Activated T-helper 2 cell treated with anti-CD3 and anti-CD28 coated beads, Interferon-gamma antibody, Interleukin-2, Interleukin-4, amounts not matched to agents 10 μg/mL and 5 μg/mL and 100 μg/mL, durations not matched to agents 14 hours and 24 hours and 36 hours (primary cell): ENCODE measurements at regions of chr6 and their contacts with region 1.

Region 1: GRCh38 chr6:107033126-107033525 is 5.1 kb downstream of the MTRES1 start:
- DNase-seq: no peak
- H3K4me3 Mint-ChIP-seq: no peak overlapping the region
- H3K27ac Mint-ChIP-seq: peak overlapping the region; percentile 81
- H3K4me1 Mint-ChIP-seq: peaks cover 32% of the 10 kb centered on the region
- H3K27me3 Mint-ChIP-seq: no peaks in the 10 kb centered on the region

Region 2: GRCh38 chr6:106894978-106895702 is 138.0 kb before region 1 on chr6:
- intact Hi-C with region 1: no loop called
- DNase-seq: no peak
- H3K4me3 Mint-ChIP-seq: no peak overlapping the region
- H3K27ac Mint-ChIP-seq: no peak overlapping the region
- H3K4me1 Mint-ChIP-seq: no peaks in the 10 kb centered on the region
- H3K27me3 Mint-ChIP-seq: peaks cover 6% of the 10 kb centered on the region

Region 3: GRCh38 chr6:106974999-106975737 is 58.0 kb before region 1 on chr6:
- intact Hi-C with region 1: no loop called
- DNase-seq: peak; percentile 9
- H3K4me3 Mint-ChIP-seq: peak overlapping the region; percentile 65
- H3K27ac Mint-ChIP-seq: no peak overlapping the region
- H3K4me1 Mint-ChIP-seq: peaks cover 11% of the 10 kb centered on the region
- H3K27me3 Mint-ChIP-seq: peaks cover 60% of the 10 kb centered on the region

Region 4: GRCh38 chr6:107021446-107022185 is 11.5 kb before region 1 on chr6:
- intact Hi-C with region 1: no loop called
- DNase-seq: no peak
- H3K4me3 Mint-ChIP-seq: no peak overlapping the region
- H3K27ac Mint-ChIP-seq: no peak overlapping the region
- H3K4me1 Mint-ChIP-seq: peaks cover 5% of the 10 kb centered on the region
- H3K27me3 Mint-ChIP-seq: peaks cover 2% of the 10 kb centered on the region

Region 5: DNA sequence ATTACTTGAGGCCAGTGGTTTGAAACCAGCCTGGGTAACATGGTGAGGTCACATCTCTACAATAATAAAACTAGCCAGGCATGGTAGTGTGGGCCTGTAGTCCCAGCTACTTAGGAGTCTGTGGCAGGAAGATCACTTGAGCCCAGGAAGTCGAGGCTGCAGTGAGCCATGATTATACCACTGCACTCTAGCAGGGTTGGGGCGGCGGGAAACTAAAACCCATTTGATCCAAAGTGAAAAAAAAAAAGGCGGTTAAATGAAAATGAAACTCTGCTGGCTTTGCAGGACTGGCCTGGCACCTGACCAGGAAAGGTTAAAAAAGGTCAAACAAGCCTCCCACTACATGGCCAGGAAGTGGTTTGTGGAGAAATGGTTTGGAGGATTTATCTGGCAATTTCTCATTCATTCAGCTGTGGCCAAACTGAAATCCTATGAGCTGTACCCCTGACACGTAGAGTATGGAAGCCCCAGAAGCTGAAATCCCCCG is 31.5 kb after region 1 on chr6:
- intact Hi-C with region 1: loop called (anchors 1 kb)
- DNase-seq: peak; percentile 38
- H3K4me3 Mint-ChIP-seq: no peak overlapping the region
- H3K27ac Mint-ChIP-seq: peak overlapping the region; percentile 95
- H3K4me1 Mint-ChIP-seq: peaks cover 66% of the 10 kb centered on the region
- H3K27me3 Mint-ChIP-seq: no peaks in the 10 kb centered on the region

Region 6: GRCh38 chr6:107080036-107080435 is 46.9 kb after region 1 on chr6:
- intact Hi-C with region 1: loop called (anchors 5 kb)
- DNase-seq: no peak
- H3K4me3 Mint-ChIP-seq: no peak overlapping the region
- H3K27ac Mint-ChIP-seq: no peak overlapping the region
- H3K4me1 Mint-ChIP-seq: peaks cover 40% of the 10 kb centered on the region
- H3K27me3 Mint-ChIP-seq: no peaks in the 10 kb centered on the region

Region 7: GRCh38 chr6:107459283-107460082 is 426.4 kb after region 1 on chr6 and contains the start of gene PDSS2:
- intact Hi-C with region 1: loop called (anchors 2 kb)
- DNase-seq: peak; percentile 96
- H3K4me3 Mint-ChIP-seq: peak within 1 kb of the TSS; percentile 95
- H3K27ac Mint-ChIP-seq: peak within 1 kb of the TSS; percentile 88
- H3K4me1 Mint-ChIP-seq: peaks cover 13% of the 10 kb centered on the region
- H3K27me3 Mint-ChIP-seq: peaks cover 2% of the 10 kb centered on the region
- total RNA-seq, gene PDSS2: 13.0 and 14.4 TPM in 2 replicates